Activated naive CD4-positive, alpha-beta T cell treated with anti-CD3 and anti-CD28 coated beads for 36 hours (primary cell): ENCODE measurements at regions of chr11 and their contacts with region 1.

Region 1: DNA sequence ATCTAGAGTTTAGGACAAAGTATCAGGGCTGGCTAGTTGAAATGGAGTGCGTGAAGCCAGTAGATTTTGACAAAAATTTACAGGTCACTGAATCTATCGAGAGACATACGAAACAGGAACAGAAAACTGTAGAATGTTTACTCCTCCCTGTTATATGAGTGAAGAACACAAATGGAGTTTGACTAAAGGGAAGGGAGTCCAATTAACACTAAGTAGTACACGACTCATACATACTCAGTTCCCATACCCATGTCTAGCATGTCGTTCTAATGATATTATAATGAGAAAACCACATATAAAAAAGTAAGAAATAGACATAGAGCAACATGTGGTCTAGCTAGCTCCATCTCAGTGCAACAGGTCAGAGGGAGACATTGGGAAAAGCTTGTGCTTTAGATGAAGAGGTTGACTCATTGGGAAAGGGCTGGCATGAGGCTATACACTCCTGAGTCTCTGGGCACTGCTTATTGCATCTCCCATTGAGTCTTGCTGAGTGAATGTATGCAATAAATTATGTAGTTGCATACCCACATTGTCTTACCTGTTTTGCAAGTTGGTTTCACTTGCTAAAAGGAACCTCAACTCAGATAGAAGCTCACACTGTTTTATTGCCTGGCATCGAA is 43.5 kb downstream of the CD44 start:
- DNase-seq: no peak
- H3K4me3 Mint-ChIP-seq: peak overlapping the region; percentile 19
- H3K27ac Mint-ChIP-seq: peak overlapping the region; percentile 75
- H3K4me1 Mint-ChIP-seq: peaks cover 80% of the 10 kb centered on the region
- H3K27me3 Mint-ChIP-seq: no peaks in the 10 kb centered on the region

Region 2: DNA sequence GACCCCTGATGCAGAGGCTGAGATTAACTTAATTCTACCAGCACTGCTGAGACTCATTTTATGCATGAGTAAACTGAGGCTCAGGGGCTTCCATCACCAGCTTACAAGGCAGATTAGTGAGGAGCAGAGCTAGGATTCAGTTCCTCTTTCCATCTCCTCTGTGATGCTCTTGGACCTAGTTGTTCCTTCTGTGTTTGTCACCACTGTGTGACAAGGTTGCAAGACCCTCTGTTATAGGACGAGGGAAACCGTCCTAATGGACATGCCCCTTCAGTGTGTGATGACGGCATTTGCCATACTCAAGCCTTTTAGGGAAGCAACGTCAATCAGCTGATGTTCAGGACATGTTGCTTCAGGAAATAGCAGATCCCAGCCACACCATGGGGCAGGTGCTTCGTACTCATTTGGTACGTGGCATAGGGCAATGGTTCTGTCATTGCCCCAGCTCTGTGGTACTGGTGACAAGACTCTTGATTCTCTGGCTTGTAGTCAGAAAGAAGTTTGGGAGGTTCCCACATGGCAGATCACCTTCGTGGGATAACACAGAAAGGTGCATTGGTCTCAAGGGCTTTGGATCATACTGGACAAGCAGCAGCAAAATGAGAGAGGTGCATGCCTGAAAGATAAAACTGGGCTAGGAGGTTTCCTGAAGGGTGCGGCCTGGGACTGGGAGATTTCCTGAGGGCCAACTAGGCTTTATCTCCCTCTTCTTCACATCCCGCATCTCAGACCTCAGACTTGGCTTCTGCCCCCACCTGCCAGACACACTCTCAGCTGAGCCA is 67.3 kb before region 1 on chr11:
- CTCF ChIA-PET with region 1: no interaction called
- intact Hi-C with region 1: no loop called
- DNase-seq: no peak
- H3K4me3 Mint-ChIP-seq: no peak overlapping the region
- H3K27ac Mint-ChIP-seq: no peak overlapping the region
- H3K4me1 Mint-ChIP-seq: peaks cover 20% of the 10 kb centered on the region
- H3K27me3 Mint-ChIP-seq: no peaks in the 10 kb centered on the region

Region 3: DNA sequence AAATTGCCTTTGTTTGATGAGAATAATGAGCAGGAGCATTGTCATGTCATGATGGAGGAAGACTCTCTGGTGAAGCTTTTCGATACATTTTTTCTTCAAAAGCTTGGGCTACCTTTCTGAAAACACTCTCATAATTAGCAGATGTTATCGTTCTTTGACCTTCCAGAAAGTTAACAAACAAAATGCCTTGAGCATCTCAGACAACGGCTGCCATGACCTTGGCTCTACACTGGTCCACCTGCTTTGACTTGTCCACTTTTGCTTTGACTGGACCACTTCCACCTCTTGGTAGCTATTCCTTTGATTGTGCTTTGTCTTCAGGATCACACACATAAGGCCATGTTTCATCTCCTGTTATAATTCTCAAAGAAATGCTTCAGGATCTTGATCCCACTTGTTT is 10.5 kb before region 1 on chr11:
- CTCF ChIA-PET with region 1: interaction called, 26 read pairs
- intact Hi-C with region 1: loop called (anchors 1 kb)
- DNase-seq: no peak
- H3K4me3 Mint-ChIP-seq: no peak overlapping the region
- H3K27ac Mint-ChIP-seq: peak overlapping the region; percentile 82
- H3K4me1 Mint-ChIP-seq: peaks cover 96% of the 10 kb centered on the region
- H3K27me3 Mint-ChIP-seq: no peaks in the 10 kb centered on the region